Activated T-helper 1 cell treated with anti-CD3 and anti-CD28 coated beads, Interleukin-12 subunit alpha, Interleukin-12 subunit beta, Interleukin-2, Interleukin-4 antibody, amounts not matched to agents 30 ng/mL and 10 ng/mL and 1 ng/mL, durations not matched to agents 14 hours and 24 hours and 36 hours (primary cell): ENCODE measurements at regions of chr6 and their contacts with region 1.

Region 1: GRCh38 chr6:26122793-26123674 is 35.8 kb downstream of the HFE start:
- DNase-seq: peak; percentile 86
- H3K4me3 Mint-ChIP-seq: peak overlapping the region; percentile 99
- H3K27ac Mint-ChIP-seq: peak overlapping the region; percentile 100
- H3K4me1 Mint-ChIP-seq: peaks cover 49% of the 10 kb centered on the region
- H3K27me3 Mint-ChIP-seq: peaks cover 3% of the 10 kb centered on the region

Region 2: GRCh38 chr6:26045065-26045927 is 77.7 kb before region 1 on chr6:
- intact Hi-C with region 1: loop called (anchors 1 kb)
- DNase-seq: peak; percentile 82
- H3K4me3 Mint-ChIP-seq: peak overlapping the region; percentile 86
- H3K27ac Mint-ChIP-seq: peak overlapping the region; percentile 98
- H3K4me1 Mint-ChIP-seq: peaks cover 49% of the 10 kb centered on the region
- H3K27me3 Mint-ChIP-seq: no peaks in the 10 kb centered on the region

Region 3: GRCh38 chr6:26065952-26066380 is 57.1 kb before region 1 on chr6:
- intact Hi-C with region 1: loop called (anchors 1 kb)
- DNase-seq: peak; percentile 50
- H3K4me3 Mint-ChIP-seq: no peak overlapping the region
- H3K27ac Mint-ChIP-seq: no peak overlapping the region
- H3K4me1 Mint-ChIP-seq: peaks cover 17% of the 10 kb centered on the region
- H3K27me3 Mint-ChIP-seq: peaks cover 7% of the 10 kb centered on the region

Region 4: DNA sequence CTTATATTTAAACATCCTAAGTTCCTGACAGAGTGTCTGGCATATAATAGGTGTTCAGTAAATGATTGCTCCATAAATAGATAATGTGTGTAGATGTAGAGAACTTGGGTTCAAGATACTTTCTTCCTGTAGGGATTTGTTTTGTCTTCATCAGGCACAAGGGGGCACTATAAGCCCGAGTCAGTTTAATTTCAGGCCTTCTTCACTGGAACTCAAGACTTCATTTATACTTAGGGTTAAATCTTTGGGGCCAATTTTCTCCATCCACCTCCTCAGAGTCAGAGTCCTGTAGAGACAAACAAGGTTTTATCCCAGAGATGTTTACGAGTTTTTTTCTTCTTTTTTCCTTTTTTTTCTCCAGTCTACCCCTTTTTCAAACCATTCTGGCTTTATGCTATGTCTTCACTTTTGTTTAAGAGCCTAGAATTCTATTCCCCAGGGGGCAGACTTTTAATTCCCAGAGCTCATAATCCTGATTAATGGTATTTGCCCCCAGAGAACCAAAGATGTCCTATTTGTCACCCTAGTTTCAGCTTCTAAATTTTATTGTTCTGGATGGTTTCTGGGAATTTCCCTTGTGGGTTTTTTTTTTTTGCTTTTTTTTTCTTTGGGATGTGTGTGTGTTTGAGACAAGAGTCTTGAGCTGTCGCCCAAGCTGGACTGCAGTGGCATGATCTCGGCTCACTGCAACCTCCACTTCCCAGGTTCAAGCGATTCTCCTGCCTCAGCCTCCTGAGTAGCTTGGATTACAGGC is 52.6 kb after region 1 on chr6:
- intact Hi-C with region 1: loop called (anchors 1 kb)
- DNase-seq: peak; percentile 58
- H3K4me3 Mint-ChIP-seq: peak overlapping the region; percentile 19
- H3K27ac Mint-ChIP-seq: peak overlapping the region; percentile 79
- H3K4me1 Mint-ChIP-seq: peaks cover 51% of the 10 kb centered on the region
- H3K27me3 Mint-ChIP-seq: no peaks in the 10 kb centered on the region

Region 5: DNA sequence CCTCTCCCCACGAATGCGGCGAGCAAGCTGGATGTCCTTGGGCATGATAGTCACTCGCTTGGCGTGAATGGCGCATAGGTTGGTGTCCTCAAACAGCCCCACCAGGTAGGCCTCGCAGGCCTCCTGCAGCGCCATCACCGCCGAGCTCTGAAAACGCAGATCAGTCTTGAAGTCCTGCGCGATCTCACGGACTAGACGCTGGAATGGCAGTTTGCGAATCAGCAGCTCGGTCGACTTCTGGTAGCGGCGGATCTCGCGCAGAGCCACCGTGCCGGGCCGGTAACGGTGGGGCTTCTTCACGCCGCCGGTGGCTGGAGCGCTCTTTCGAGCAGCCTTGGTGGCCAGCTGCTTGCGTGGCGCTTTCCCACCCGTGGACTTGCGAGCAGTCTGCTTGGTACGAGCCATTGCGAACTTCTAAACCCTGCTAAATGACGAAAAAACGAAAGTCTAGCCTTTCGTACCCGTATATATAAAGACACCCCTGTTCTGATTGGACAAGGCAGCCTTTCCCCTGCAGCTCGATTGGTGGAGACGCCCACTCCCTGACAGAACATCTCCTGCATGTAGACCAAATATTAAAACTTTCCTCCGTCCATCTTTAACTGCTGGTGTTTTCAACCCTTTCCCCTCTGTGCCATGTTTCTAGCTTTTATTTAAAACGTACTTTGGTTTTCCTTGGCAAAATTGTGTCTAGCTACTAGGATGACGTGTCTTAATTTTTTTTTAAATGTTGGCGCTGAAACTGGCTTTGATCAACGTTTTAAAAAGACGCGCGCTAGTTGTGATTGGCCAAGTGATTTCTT is 74.0 kb after region 1 on chr6:
- intact Hi-C with region 1: loop called (anchors 1 kb)
- DNase-seq: peak; percentile 84
- H3K4me3 Mint-ChIP-seq: peak overlapping the region; percentile 92
- H3K27ac Mint-ChIP-seq: peak overlapping the region; percentile 95
- H3K4me1 Mint-ChIP-seq: peaks cover 54% of the 10 kb centered on the region
- H3K27me3 Mint-ChIP-seq: no peaks in the 10 kb centered on the region

Region 6: DNA sequence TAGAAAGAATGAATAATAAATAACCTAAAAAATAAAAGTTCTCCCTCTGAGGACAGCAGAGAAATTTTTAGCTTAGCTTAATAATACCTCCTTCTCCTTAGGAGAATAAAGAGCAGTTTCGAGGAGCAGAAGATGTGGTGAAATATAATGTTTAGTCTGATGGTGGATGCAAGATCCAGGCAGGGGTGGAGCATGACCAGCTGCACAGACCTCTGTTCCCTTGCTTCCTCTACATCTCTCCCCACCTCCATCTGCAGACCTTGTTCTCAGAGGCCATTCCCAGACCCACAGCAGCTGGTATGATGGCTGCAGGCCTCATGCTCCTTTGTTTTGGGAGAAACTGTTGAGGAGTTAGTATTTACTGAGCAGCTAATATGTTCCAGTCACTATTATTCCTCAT is 243.5 kb after region 1 on chr6:
- intact Hi-C with region 1: no loop called
- DNase-seq: no peak
- H3K4me3 Mint-ChIP-seq: peak overlapping the region; percentile 78
- H3K27ac Mint-ChIP-seq: peak overlapping the region; percentile 53
- H3K4me1 Mint-ChIP-seq: peaks cover 53% of the 10 kb centered on the region
- H3K27me3 Mint-ChIP-seq: no peaks in the 10 kb centered on the region

Region 7: GRCh38 chr6:27505209-27506027 is 1382.4 kb after region 1 on chr6:
- intact Hi-C with region 1: no loop called
- DNase-seq: no peak
- H3K4me3 Mint-ChIP-seq: no peak overlapping the region
- H3K27ac Mint-ChIP-seq: no peak overlapping the region
- H3K4me1 Mint-ChIP-seq: peaks cover 32% of the 10 kb centered on the region
- H3K27me3 Mint-ChIP-seq: peaks cover 31% of the 10 kb centered on the region